ENCODE measurements at regions of chr10 and their contacts with region 1.

Region 1: DNA sequence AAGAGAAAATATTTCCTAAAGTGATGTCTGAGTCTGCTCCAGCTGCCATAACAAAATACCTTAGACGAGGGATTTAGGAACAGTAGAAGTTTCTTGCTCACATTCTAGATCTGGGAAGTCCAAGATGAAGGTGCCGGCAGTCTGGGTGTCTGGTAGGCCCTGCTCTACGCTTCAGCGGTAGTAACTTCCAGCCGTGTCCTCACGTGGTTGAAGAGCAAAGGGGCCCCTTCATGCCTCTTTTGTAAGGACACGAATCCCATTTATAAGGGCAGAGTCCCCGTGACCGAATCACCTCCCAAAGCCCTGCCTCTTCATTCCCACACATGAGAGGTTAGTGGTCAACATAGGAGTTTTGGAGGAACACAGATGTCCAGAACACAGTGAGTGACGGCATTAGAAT is 52.2 kb upstream of the INPP5A start:
- DNase-seq: no peak
- H3K4me3 ChIP-seq: no peak overlapping the region
- H3K27ac ChIP-seq: no peak overlapping the region
- H3K27me3 ChIP-seq: no peaks in the 10 kb centered on the region
- CTCF ChIP-seq: no peak

Region 2: GRCh38 chr10:132434405-132435005 is 50.9 kb before region 1 on chr10:
- CTCF ChIA-PET with region 1: no interaction called
- POLR2A ChIA-PET with region 1: no interaction called
- DNase-seq: no peak
- H3K4me3 ChIP-seq: no peak overlapping the region
- H3K27ac ChIP-seq: no peak overlapping the region
- H3K27me3 ChIP-seq: no peaks in the 10 kb centered on the region
- CTCF ChIP-seq: no peak

Region 3: GRCh38 chr10:132469197-132469884 is 16.1 kb before region 1 on chr10:
- CTCF ChIA-PET with region 1: no interaction called
- POLR2A ChIA-PET with region 1: no interaction called
- DNase-seq: no peak
- H3K4me3 ChIP-seq: no peak overlapping the region
- H3K27ac ChIP-seq: no peak overlapping the region
- H3K27me3 ChIP-seq: no peaks in the 10 kb centered on the region
- CTCF ChIP-seq: no peak

Region 4: GRCh38 chr10:132506711-132507408 is 21.5 kb after region 1 on chr10:
- CTCF ChIA-PET with region 1: no interaction called
- POLR2A ChIA-PET with region 1: no interaction called
- DNase-seq: no peak
- H3K4me3 ChIP-seq: no peak overlapping the region
- H3K27ac ChIP-seq: no peak overlapping the region
- H3K27me3 ChIP-seq: peaks cover 22% of the 10 kb centered on the region
- CTCF ChIP-seq: no peak

Region 5: GRCh38 chr10:132532783-132533560 is 47.6 kb after region 1 on chr10:
- CTCF ChIA-PET with region 1: interaction called, 11 read pairs
- POLR2A ChIA-PET with region 1: no interaction called
- DNase-seq: peak; percentile 54
- H3K4me3 ChIP-seq: no peak overlapping the region
- H3K27ac ChIP-seq: no peak overlapping the region
- H3K27me3 ChIP-seq: no peaks in the 10 kb centered on the region
- CTCF ChIP-seq: no peak